Sciatic nerve (tissue), 2 donors: ENCODE measurements at regions of chr2 and their contacts with region 1.

Region 1: GRCh38 chr2:69714024-69714423 is 27.9 kb upstream of the ANXA4 start:
- DNase-seq: no peak
- ATAC-seq: no peak

Region 2: DNA sequence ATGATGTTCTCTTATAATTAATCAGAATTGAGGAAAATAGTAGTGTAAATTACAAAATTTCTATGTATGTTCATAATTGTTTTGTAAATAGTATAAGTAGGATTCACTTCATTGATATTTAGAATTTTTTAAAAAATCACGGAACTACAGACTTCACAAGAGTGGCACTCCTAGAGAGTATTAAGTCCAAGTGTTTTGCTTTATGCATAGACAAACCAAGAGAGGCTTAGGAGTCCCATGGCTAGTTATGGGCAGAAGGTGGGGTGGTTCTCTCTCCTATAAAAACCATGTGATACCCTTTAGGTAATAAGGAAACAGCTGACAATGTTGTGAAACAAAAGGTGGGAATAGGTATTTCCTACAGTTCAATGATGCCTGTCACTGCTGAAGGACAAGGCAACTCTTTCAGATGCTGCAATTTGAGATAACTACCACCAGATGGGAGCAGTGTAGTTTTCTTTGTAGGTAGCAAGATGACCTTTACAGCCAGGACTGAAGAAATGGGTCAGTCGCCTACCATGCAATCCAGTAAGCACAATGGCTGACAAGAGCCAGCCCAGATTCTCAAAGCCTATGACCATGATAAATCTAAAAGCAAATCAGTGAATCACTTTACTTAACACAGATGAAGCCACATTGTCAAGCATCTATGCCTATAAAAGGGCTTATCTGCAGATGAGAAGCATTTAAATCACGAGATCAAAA is 154.4 kb before region 1 on chr2:
- intact Hi-C with region 1: loop called (anchors 5 kb)
- DNase-seq: no peak
- ATAC-seq: peak; percentile 75

Region 3: GRCh38 chr2:69652221-69652651 is 61.8 kb before region 1 on chr2:
- intact Hi-C with region 1: no loop called
- DNase-seq: no peak
- ATAC-seq: no peak

Region 4: GRCh38 chr2:69858261-69858660 is 144.2 kb after region 1 on chr2:
- intact Hi-C with region 1: no loop called
- DNase-seq: no peak
- ATAC-seq: no peak